ENCODE measurements at regions of chr5 and their contacts with region 1.

Region 1: GRCh38 chr5:180718810-180719453 is 20.9 kb downstream of the OR2Y1 start:
- DNase-seq: peak in 4 of 5 donors; percentile 35 to 45 (median 38)
- H3K4me3 ChIP-seq: no peak overlapping the region
- H3K4me3 Mint-ChIP-seq: no peak overlapping the region
- H3K27ac ChIP-seq: no peak overlapping the region
- H3K27ac Mint-ChIP-seq: peak overlapping the region in 1 of 7 donors; percentile 22
- H3K4me1 ChIP-seq: no peaks in the 10 kb centered on the region
- H3K4me1 Mint-ChIP-seq: peaks cover 0 to 4% (median 3%) of the 10 kb centered on the region in 4 donors
- H3K27me3 ChIP-seq: no peaks in the 10 kb centered on the region
- H3K27me3 Mint-ChIP-seq: peaks cover 17% of the 10 kb centered on the region in 2 donors

Region 2: GRCh38 chr5:180605554-180606214 is 113.2 kb before region 1 on chr5:
- CTCF ChIA-PET with region 1: interaction called, 5 read pairs
- POLR2A ChIA-PET with region 1: no interaction called
- intact Hi-C with region 1: loop called (anchors 10 kb)
- DNase-seq: peak in 4 of 5 donors; percentile 30 to 38 (median 34)
- H3K4me3 ChIP-seq: no peak overlapping the region
- H3K4me3 Mint-ChIP-seq: no peak overlapping the region
- H3K27ac ChIP-seq: no peak overlapping the region
- H3K27ac Mint-ChIP-seq: peak overlapping the region in 1 of 7 donors; percentile 9
- H3K4me1 ChIP-seq: no peaks in the 10 kb centered on the region
- H3K4me1 Mint-ChIP-seq: peaks cover 2 to 10% (median 6%) of the 10 kb centered on the region in 4 donors
- H3K27me3 ChIP-seq: no peaks in the 10 kb centered on the region
- H3K27me3 Mint-ChIP-seq: peaks cover 2 to 4% of the 10 kb centered on the region in 2 donors

Region 3: GRCh38 chr5:180670586-180671359 is 48.2 kb before region 1 on chr5:
- CTCF ChIA-PET with region 1: interaction called, 4 read pairs
- POLR2A ChIA-PET with region 1: no interaction called
- intact Hi-C with region 1: loop called (anchors 1 kb)
- DNase-seq: peak in 4 of 5 donors; percentile 18 to 34 (median 21)
- H3K4me3 ChIP-seq: no peak overlapping the region
- H3K4me3 Mint-ChIP-seq: peak overlapping the region in 5 of 8 donors; percentile 51 to 75 (median 68)
- H3K27ac ChIP-seq: no peak overlapping the region
- H3K27ac Mint-ChIP-seq: peak overlapping the region in 1 of 7 donors; percentile 4
- H3K4me1 ChIP-seq: peaks cover 10% of the 10 kb centered on the region
- H3K4me1 Mint-ChIP-seq: peaks cover 13 to 17% (median 14%) of the 10 kb centered on the region in 4 donors
- H3K27me3 ChIP-seq: no peaks in the 10 kb centered on the region
- H3K27me3 Mint-ChIP-seq: peaks cover 5 to 12% of the 10 kb centered on the region in 2 donors

Region 4: DNA sequence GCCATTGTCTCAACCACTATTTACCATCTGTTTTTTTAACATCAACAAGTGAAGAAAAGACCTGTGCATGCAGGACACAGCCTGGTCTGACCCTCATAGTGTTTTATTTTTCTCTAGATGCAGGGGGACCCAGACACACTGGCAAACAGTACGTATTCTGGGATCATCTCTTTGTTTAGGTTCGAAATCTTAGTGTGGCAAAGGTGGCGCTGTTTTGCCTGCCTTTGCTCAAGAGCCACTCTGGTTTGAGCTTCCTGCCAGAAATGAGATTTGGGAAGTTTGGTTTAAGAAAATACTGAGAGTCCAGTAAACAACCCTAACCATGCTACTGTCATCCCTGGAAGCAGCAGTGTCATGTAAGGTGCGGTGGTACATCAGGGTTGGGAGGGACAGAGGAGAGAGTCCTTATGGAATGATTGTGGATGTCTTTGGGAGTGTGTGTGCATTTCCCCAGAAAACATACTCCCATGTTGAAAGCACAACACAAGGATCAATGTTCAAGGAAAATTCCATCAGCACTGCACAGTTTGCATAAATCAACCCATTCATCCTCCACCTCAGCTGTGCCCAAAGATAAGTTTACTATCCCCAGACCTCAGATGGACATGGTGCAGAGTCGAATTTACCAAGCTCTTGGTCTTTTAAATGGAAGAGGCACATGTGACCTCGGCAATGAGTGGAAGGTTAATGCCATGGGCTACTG is 35.6 kb before region 1 on chr5:
- CTCF ChIA-PET with region 1: interaction called, 11 read pairs
- POLR2A ChIA-PET with region 1: no interaction called
- intact Hi-C with region 1: no loop called
- DNase-seq: no peak
- H3K4me3 ChIP-seq: no peak overlapping the region
- H3K4me3 Mint-ChIP-seq: peak overlapping the region in 2 of 8 donors; percentile 6 to 18
- H3K27ac ChIP-seq: no peak overlapping the region
- H3K27ac Mint-ChIP-seq: peak overlapping the region in 2 of 7 donors; percentile 34 to 36
- H3K4me1 ChIP-seq: peaks cover 19% of the 10 kb centered on the region
- H3K4me1 Mint-ChIP-seq: peaks cover 13 to 27% (median 19%) of the 10 kb centered on the region in 4 donors
- H3K27me3 ChIP-seq: no peaks in the 10 kb centered on the region
- H3K27me3 Mint-ChIP-seq: no peaks in the 10 kb centered on the region

Region 5: DNA sequence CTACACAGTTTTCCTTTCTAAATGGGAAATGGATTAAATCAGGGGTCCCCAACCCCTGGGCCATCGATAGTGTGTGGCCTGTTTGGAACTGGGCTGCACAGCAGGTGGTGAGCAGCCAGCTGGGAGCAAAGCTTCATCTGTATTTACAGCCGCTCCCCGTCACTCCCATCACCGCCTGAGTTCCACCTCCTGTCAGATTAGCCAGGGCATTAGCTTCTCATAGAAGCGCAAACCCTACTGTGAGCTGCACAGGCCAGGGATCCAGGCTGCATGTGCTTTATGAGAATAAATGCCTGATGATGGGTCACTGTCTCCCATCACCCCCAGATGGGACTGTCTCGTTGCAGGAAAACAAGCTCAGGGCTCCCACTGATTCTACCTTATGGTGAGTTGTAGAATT is 28.4 kb before region 1 on chr5:
- CTCF ChIA-PET with region 1: interaction called, 24 read pairs
- POLR2A ChIA-PET with region 1: no interaction called
- intact Hi-C with region 1: no loop called
- DNase-seq: no peak
- H3K4me3 ChIP-seq: no peak overlapping the region
- H3K4me3 Mint-ChIP-seq: no peak overlapping the region
- H3K27ac ChIP-seq: no peak overlapping the region
- H3K27ac Mint-ChIP-seq: peak overlapping the region in 2 of 7 donors; percentile 24 to 71
- H3K4me1 ChIP-seq: peaks cover 38% of the 10 kb centered on the region
- H3K4me1 Mint-ChIP-seq: peaks cover 27 to 39% (median 32%) of the 10 kb centered on the region in 4 donors
- H3K27me3 ChIP-seq: no peaks in the 10 kb centered on the region
- H3K27me3 Mint-ChIP-seq: peaks cover 6 to 12% of the 10 kb centered on the region in 2 donors

Measured in CD4-positive, alpha-beta memory T cell (primary cell).